Aorta (tissue), 5 donors: ENCODE measurements at regions of chr18 and their contacts with region 1.

Region 1: GRCh38 chr18:2540575-2540974 is 30.7 kb downstream of the METTL4 start:
- DNase-seq: no peak
- ATAC-seq: no peak
- H3K4me3 ChIP-seq: no peak overlapping the region
- H3K27ac ChIP-seq: no peak overlapping the region
- H3K4me1 ChIP-seq: no peaks in the 10 kb centered on the region
- H3K27me3 ChIP-seq: no peaks in the 10 kb centered on the region

Region 2: DNA sequence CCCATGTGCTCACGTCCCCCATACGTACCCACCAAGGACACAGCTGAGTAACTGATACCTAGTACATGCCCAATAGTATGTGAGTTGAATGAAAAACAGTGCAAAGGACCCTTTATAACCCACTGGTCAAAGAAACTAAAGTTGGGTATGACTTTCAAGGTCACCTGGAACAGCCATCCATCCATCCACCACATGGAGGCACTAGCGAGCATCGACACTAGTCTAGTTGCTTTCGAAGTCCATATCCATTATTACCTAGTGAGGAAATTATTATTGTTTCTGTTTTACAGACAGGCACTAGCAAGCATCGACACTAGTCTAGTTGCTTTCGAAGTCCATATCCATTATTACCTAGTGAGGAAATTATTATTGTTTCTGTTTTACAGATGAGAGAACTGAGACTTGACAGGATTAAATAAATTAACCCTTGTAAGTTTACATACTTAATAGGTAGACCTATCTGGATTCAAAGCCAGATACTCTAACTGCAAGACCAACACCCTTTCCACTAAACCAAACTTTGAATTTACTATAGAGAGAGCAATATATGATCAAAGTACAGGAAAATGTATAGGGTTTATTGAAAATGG is 202.9 kb before region 1 on chr18:
- intact Hi-C with region 1: loop called (anchors 2 to 5 kb)
- DNase-seq: peak in 1 of 2 donors; percentile 58
- ATAC-seq: no peak
- H3K4me3 ChIP-seq: no peak overlapping the region
- H3K27ac ChIP-seq: no peak overlapping the region
- H3K4me1 ChIP-seq: no peaks in the 10 kb centered on the region
- H3K27me3 ChIP-seq: no peaks in the 10 kb centered on the region